ENCODE measurements at regions of chr20 and their contacts with region 1.

Region 1: DNA sequence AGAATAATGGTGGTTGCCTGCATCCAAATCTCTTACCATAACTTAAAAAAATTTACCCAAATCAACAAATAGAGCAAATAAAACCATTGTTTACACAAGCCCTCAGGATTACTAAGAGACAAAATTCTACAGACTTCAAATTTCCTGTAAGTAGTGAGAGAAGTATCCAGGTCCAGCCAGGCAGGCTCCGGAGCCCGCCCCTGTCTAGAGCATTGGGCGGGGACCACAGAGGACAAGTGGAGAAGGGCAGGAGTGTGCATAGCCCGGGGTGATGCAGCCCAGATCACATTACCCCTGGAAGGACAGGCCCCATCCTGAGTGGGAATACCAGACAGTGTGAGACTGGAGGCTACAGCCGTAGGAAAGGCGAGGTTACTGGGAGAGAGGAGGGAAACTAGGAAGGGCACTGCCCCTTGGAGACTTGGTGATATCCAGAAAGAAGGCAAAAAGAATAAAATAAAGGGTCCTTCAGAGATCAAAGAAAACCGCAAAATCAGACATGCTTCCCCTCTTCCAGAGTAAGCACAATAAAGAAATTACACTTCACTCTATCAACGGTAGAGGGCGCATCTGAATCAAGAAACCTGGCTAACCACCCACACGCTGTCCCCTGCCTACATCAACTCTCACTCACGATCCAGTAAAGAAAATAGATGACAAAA is 26.6 kb downstream of the RIN2 start:
- DNase-seq: peak; percentile 89
- H3K4me3 Mint-ChIP-seq: peak overlapping the region; percentile 51
- H3K27ac Mint-ChIP-seq: peak overlapping the region; percentile 86
- H3K4me1 Mint-ChIP-seq: peaks cover 60% of the 10 kb centered on the region
- H3K27me3 Mint-ChIP-seq: no peaks in the 10 kb centered on the region
- CTCF ChIP-seq: peak; percentile 68

Region 2: DNA sequence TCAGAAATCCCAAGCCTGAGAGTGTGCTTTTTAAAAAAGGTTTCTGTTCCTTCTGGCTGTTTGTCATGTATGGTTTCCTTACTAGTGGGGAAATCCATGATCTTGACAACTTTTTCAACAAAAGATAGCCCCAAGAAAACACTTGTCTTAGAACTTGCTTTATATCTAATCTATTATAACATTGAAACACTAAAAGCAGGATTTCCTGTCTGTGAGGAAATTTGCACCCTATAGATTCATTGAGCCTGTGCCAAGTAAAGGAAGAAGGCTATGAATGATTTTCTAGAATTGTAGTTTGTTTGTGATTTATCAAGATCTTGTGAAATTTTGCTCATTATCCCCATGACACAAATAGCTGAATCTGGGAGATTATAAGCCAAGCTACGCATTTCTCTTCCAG is 265.2 kb before region 1 on chr20:
- CTCF ChIA-PET with region 1: no interaction called
- POLR2A ChIA-PET with region 1: no interaction called
- intact Hi-C with region 1: no loop called
- DNase-seq: no peak
- H3K4me3 Mint-ChIP-seq: no peak overlapping the region
- H3K27ac Mint-ChIP-seq: no peak overlapping the region
- H3K4me1 Mint-ChIP-seq: no peaks in the 10 kb centered on the region
- H3K27me3 Mint-ChIP-seq: no peaks in the 10 kb centered on the region
- CTCF ChIP-seq: no peak

Region 3: DNA sequence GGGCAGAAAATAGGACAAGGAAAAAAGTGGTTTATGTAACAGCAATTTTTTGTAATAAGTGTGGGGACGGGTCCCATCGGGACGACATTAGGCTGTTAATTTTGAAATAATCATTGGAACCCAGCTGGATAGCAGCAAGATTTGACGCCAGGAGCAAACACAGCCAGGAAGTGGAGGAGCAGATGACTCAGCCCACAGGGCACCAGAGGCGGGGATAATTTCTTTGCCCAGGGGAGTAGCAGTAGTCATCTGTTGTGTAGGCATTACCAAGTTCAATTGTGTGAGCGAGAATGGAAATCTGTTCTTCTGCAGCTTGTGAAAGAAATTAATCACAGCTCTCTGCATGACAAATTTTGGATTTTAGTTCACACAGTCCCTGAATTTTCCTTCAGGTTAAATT is 49.2 kb before region 1 on chr20:
- CTCF ChIA-PET with region 1: interaction called, 11 read pairs
- POLR2A ChIA-PET with region 1: interaction called, 14 read pairs
- intact Hi-C with region 1: no loop called
- DNase-seq: peak; percentile 96
- H3K4me3 Mint-ChIP-seq: peak overlapping the region; percentile 27
- H3K27ac Mint-ChIP-seq: peak overlapping the region; percentile 87
- H3K4me1 Mint-ChIP-seq: peaks cover 25% of the 10 kb centered on the region
- H3K27me3 Mint-ChIP-seq: no peaks in the 10 kb centered on the region
- CTCF ChIP-seq: no peak

Region 4: DNA sequence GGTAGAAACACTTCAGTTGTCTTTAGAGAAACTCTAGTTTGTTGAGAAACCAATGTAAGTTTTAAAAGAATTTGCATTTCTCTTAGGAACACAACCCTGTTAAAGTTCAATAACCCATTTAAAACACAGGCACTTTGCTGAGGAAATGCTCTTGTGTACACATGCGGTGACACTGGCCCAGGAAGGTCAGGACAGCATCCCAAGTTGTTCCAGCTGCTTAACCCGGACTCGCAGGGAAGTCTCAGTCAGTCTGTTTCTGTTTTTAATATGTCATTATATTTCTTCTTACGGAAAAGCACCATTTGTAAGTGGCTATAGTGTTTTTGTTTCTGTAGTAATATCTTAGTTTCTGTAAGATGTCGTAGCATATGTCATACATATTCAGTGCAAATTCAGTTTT is 10.3 kb after region 1 on chr20:
- CTCF ChIA-PET with region 1: interaction called, 34 read pairs
- POLR2A ChIA-PET with region 1: interaction called, 9 read pairs
- intact Hi-C with region 1: no loop called
- DNase-seq: no peak
- H3K4me3 Mint-ChIP-seq: no peak overlapping the region
- H3K27ac Mint-ChIP-seq: no peak overlapping the region
- H3K4me1 Mint-ChIP-seq: peaks cover 7% of the 10 kb centered on the region
- H3K27me3 Mint-ChIP-seq: no peaks in the 10 kb centered on the region
- CTCF ChIP-seq: no peak

Region 5: GRCh38 chr20:19828232-19828631 is 43.6 kb after region 1 on chr20:
- CTCF ChIA-PET with region 1: interaction called, 92 read pairs
- POLR2A ChIA-PET with region 1: interaction called, 24 read pairs
- intact Hi-C with region 1: loop called (anchors 1 kb)
- DNase-seq: peak; percentile 72
- H3K4me3 Mint-ChIP-seq: peak overlapping the region; percentile 9
- H3K27ac Mint-ChIP-seq: peak overlapping the region; percentile 60
- H3K4me1 Mint-ChIP-seq: peaks cover 17% of the 10 kb centered on the region
- H3K27me3 Mint-ChIP-seq: no peaks in the 10 kb centered on the region
- CTCF ChIP-seq: peak; percentile 46

Region 6: GRCh38 chr20:19903168-19903811 is 118.6 kb after region 1 on chr20:
- CTCF ChIA-PET with region 1: interaction called, 5 read pairs
- POLR2A ChIA-PET with region 1: no interaction called
- intact Hi-C with region 1: loop called (anchors 1 kb)
- DNase-seq: peak; percentile 30
- H3K4me3 Mint-ChIP-seq: no peak overlapping the region
- H3K27ac Mint-ChIP-seq: no peak overlapping the region
- H3K4me1 Mint-ChIP-seq: peaks cover 5% of the 10 kb centered on the region
- H3K27me3 Mint-ChIP-seq: no peaks in the 10 kb centered on the region
- CTCF ChIP-seq: no peak

Region 7: DNA sequence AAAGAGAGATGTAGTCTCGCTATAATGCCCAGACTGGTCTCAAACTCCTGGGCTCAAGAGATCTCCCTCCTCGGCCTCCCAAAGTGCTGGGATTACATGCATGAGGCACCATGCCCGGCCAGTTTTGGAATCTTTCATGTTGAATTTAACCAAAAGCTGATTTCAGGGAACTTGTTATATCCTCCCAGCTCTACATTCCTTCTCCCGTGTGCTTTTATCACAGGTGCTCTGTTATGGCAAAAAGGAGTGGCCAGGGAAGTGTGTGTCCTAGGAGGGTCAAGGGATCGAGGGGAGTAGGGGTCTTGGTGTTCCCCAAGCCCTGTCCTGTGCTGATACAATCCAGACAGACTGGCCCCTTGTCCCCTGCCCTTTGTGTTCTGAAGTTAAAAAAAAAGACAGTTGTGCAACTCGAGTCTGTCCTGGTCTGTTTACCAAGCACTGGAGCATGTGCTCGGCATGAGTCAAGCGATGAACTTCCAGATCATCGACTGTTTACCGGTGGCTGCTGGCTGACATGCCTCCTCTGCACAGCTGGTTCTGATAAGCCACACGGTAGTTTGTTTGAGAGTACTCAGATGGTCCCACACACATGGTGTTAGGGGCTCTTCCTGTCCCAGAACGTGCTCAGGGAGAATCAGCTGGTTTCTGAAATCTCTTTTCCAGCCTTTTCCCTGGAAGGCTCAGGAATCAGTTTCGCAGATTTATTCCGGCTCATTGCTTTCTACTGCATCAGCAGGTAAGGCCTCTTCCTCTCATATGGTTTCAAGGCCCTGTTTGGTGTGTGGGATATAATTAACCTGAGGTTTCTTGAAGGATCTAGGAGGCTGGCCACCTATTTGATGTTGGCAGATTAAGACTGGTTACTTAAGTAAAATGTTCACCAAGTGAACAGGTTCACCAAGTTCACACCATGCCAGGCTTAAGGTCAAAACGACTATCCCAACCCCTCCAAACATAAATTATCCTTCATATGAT is 179.9 kb after region 1 on chr20:
- CTCF ChIA-PET with region 1: interaction called, 9 read pairs
- POLR2A ChIA-PET with region 1: interaction called, 17 read pairs
- intact Hi-C with region 1: no loop called
- DNase-seq: peak; percentile 80
- H3K4me3 Mint-ChIP-seq: no peak overlapping the region
- H3K27ac Mint-ChIP-seq: peak overlapping the region; percentile 87
- H3K4me1 Mint-ChIP-seq: peaks cover 15% of the 10 kb centered on the region
- H3K27me3 Mint-ChIP-seq: no peaks in the 10 kb centered on the region
- CTCF ChIP-seq: no peak

Region 8: GRCh38 chr20:20017001-20017843 is 232.6 kb after region 1 on chr20 and contains the start of gene NAA20:
- CTCF ChIA-PET with region 1: interaction called, 12 read pairs
- POLR2A ChIA-PET with region 1: interaction called, 13 read pairs
- intact Hi-C with region 1: no loop called
- DNase-seq: peak; percentile 91
- H3K4me3 Mint-ChIP-seq: peak within 1 kb of the TSS; percentile 73
- H3K27ac Mint-ChIP-seq: peak within 1 kb of the TSS; percentile 95
- H3K4me1 Mint-ChIP-seq: peaks cover 41% of the 10 kb centered on the region
- H3K27me3 Mint-ChIP-seq: no peaks in the 10 kb centered on the region
- CTCF ChIP-seq: peak; percentile 71
- total RNA-seq, gene NAA20: 109 and 126 TPM in 2 replicates

Measured in MCF 10A (cell line).